Body of pancreas (tissue), 4 donors: ENCODE measurements at regions of chr4 and their contacts with region 1.

Region 1: GRCh38 chr4:10018818-10019461 is 2.4 kb downstream of the SLC2A9 start:
- DNase-seq: peak; percentile 91 to 96 (median 94)
- ATAC-seq: peak; percentile 97
- H3K4me3 ChIP-seq: no peak overlapping the region
- H3K27ac ChIP-seq: peak overlapping the region; percentile 39 to 86 (median 72)
- H3K4me1 ChIP-seq: peaks cover 15% of the 10 kb centered on the region
- H3K27me3 ChIP-seq: no peaks in the 10 kb centered on the region
- CTCF ChIP-seq: peak; percentile 85 to 99 (median 98)
- POLR2A ChIP-seq: peak in 2 of 3 donors; percentile 72 to 75

Region 2: GRCh38 chr4:9691238-9692065 is 327.5 kb before region 1 on chr4:
- intact Hi-C with region 1: loop called (anchors 10 kb)
- DNase-seq: peak; percentile 96 to 97 (median 96)
- ATAC-seq: peak; percentile 100
- H3K4me3 ChIP-seq: peak overlapping the region; percentile 30 to 51
- H3K27ac ChIP-seq: peak overlapping the region; percentile 30 to 85 (median 67)
- H3K4me1 ChIP-seq: peaks cover 13% of the 10 kb centered on the region
- H3K27me3 ChIP-seq: no peaks in the 10 kb centered on the region
- CTCF ChIP-seq: no peak
- POLR2A ChIP-seq: peak in 2 of 3 donors; percentile 29 to 40

Region 3: GRCh38 chr4:9762823-9763475 is 256.0 kb before region 1 on chr4:
- intact Hi-C with region 1: loop called (anchors 5 kb)
- DNase-seq: peak; percentile 46 to 69 (median 56)
- ATAC-seq: no peak
- H3K4me3 ChIP-seq: no peak overlapping the region
- H3K27ac ChIP-seq: no peak overlapping the region
- H3K4me1 ChIP-seq: no peaks in the 10 kb centered on the region
- H3K27me3 ChIP-seq: no peaks in the 10 kb centered on the region
- CTCF ChIP-seq: peak in 6 of 7 experiments; percentile 32 to 70 (median 66)
- POLR2A ChIP-seq: no peak